Naive thymus-derived CD4-positive, alpha-beta T cell (primary cell): ENCODE measurements at regions of chr17 and their contacts with region 1.

Region 1: DNA sequence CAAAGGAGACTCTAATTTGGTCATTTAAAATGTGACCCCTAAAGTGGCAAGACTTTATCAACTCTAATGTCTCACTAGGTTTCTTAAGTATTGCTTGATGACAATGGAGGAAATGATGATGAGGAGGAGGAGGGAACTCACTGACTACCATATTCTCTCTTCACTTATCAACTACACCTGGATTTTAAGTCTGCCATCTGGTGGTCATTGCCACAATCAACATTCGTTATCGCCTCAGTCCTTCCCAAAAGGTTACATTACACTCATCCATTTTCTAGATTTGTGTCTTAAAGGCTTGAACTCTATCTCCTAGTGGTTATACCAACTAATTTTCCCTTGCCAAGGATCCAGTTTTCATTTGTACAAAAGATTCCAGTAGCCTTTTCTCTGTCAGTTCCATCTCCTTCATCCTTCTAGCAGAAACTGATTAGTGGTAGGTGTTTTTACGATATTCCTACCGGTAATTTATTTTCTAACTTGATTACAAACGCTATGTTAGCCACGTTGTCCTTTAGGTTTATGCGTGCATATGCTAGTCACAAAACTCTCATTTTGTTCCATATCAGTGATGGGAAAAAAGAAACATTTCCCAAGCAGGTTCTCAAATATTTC is 114.6 kb upstream of the NOG start:
- DNase-seq: peak in 1 of 9 donors; percentile 8
- ATAC-seq: no peak
- H3K4me3 ChIP-seq: no peak overlapping the region
- H3K4me3 Mint-ChIP-seq: no peak overlapping the region
- H3K27ac ChIP-seq: no peak overlapping the region
- H3K27ac Mint-ChIP-seq: no peak overlapping the region
- H3K4me1 ChIP-seq: no peaks in the 10 kb centered on the region
- H3K4me1 Mint-ChIP-seq: peaks cover 0 to 17% (median 9%) of the 10 kb centered on the region in 7 donors
- H3K27me3 ChIP-seq: no peaks in the 10 kb centered on the region
- H3K27me3 Mint-ChIP-seq: peaks cover 0 to 23% (median 4%) of the 10 kb centered on the region in 5 donors

Region 2: GRCh38 chr17:56125830-56126819 is 352.8 kb before region 1 on chr17:
- CTCF ChIA-PET with region 1: no interaction called
- POLR2A ChIA-PET with region 1: no interaction called
- intact Hi-C with region 1: loop called in 1 of 2 experiments (anchors 5 kb)
- DNase-seq: peak in 3 of 9 donors; percentile 6 to 19 (median 7)
- ATAC-seq: no peak
- H3K4me3 ChIP-seq: no peak overlapping the region
- H3K4me3 Mint-ChIP-seq: no peak overlapping the region
- H3K27ac ChIP-seq: no peak overlapping the region
- H3K27ac Mint-ChIP-seq: no peak overlapping the region
- H3K4me1 ChIP-seq: no peaks in the 10 kb centered on the region
- H3K4me1 Mint-ChIP-seq: peaks cover 0 to 1% (median 0%) of the 10 kb centered on the region in 7 donors
- H3K27me3 ChIP-seq: no peaks in the 10 kb centered on the region
- H3K27me3 Mint-ChIP-seq: peaks cover 4 to 7% (median 6%) of the 10 kb centered on the region in 5 donors

Region 3: GRCh38 chr17:56540836-56541235 is 61.9 kb after region 1 on chr17:
- CTCF ChIA-PET with region 1: no interaction called
- POLR2A ChIA-PET with region 1: no interaction called
- intact Hi-C with region 1: no loop called
- DNase-seq: no peak
- ATAC-seq: no peak
- H3K4me3 ChIP-seq: no peak overlapping the region
- H3K4me3 Mint-ChIP-seq: no peak overlapping the region
- H3K27ac ChIP-seq: no peak overlapping the region
- H3K27ac Mint-ChIP-seq: no peak overlapping the region
- H3K4me1 ChIP-seq: no peaks in the 10 kb centered on the region
- H3K4me1 Mint-ChIP-seq: no peaks in the 10 kb centered on the region
- H3K27me3 ChIP-seq: no peaks in the 10 kb centered on the region
- H3K27me3 Mint-ChIP-seq: peaks cover 2 to 18% (median 7%) of the 10 kb centered on the region in 5 donors